HepG2 (cell line): ENCODE measurements at regions of chr6 and their contacts with region 1.

Region 1: GRCh38 chr6:19137505-19137904 is 699.7 kb upstream of the ID4 start:
- DNase-seq: no peak
- ATAC-seq: no peak
- H3K4me3 ChIP-seq: no peak overlapping the region
- H3K27ac ChIP-seq: no peak overlapping the region
- H3K4me1 ChIP-seq: no peaks in the 10 kb centered on the region
- H3K27me3 ChIP-seq: no peaks in the 10 kb centered on the region
- CTCF ChIP-seq: no peak
- EP300 ChIP-seq: no peak
- POLR2A ChIP-seq: no peak
- RAD21 ChIP-seq: no peak

Region 2: GRCh38 chr6:19153270-19153980 is 15.9 kb after region 1 on chr6:
- CTCF ChIA-PET with region 1: no interaction called
- POLR2A ChIA-PET with region 1: no interaction called
- in situ Hi-C with region 1: no loop called
- intact Hi-C with region 1: no loop called
- DNase-seq: no peak
- ATAC-seq: no peak
- H3K4me3 ChIP-seq: no peak overlapping the region
- H3K27ac ChIP-seq: no peak overlapping the region
- H3K4me1 ChIP-seq: no peaks in the 10 kb centered on the region
- H3K27me3 ChIP-seq: no peaks in the 10 kb centered on the region
- CTCF ChIP-seq: no peak
- EP300 ChIP-seq: no peak
- POLR2A ChIP-seq: no peak
- RAD21 ChIP-seq: no peak

Region 3: DNA sequence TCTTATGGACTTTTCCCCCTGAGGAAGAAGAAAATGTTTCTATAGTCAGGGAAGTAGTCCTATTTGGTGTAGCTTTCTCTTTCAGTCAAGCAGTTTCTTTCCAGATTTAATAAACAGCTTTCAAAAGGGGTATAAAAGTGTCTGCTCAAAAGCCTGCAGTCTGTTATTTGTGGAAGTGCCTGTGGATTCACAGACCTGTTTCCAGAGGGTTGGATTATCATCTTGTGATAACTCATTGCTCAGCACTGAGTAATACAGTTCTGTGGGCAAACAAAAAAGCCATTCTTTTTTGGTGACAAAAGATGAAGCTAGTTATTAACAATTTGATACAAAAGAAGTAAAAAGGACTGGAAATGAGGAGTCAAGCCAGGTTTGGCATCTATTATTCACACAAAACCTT is 341.5 kb after region 1 on chr6:
- CTCF ChIA-PET with region 1: no interaction called
- POLR2A ChIA-PET with region 1: no interaction called
- in situ Hi-C with region 1: no loop called
- intact Hi-C with region 1: loop called (anchors 5 kb)
- DNase-seq: no peak
- ATAC-seq: no peak
- H3K4me3 ChIP-seq: no peak overlapping the region
- H3K27ac ChIP-seq: no peak overlapping the region
- H3K4me1 ChIP-seq: no peaks in the 10 kb centered on the region
- H3K27me3 ChIP-seq: no peaks in the 10 kb centered on the region
- CTCF ChIP-seq: no peak
- EP300 ChIP-seq: no peak
- POLR2A ChIP-seq: no peak
- RAD21 ChIP-seq: no peak